GM10248 (cell line): ENCODE measurements at regions of chr6 and their contacts with region 1.

Region 1: DNA sequence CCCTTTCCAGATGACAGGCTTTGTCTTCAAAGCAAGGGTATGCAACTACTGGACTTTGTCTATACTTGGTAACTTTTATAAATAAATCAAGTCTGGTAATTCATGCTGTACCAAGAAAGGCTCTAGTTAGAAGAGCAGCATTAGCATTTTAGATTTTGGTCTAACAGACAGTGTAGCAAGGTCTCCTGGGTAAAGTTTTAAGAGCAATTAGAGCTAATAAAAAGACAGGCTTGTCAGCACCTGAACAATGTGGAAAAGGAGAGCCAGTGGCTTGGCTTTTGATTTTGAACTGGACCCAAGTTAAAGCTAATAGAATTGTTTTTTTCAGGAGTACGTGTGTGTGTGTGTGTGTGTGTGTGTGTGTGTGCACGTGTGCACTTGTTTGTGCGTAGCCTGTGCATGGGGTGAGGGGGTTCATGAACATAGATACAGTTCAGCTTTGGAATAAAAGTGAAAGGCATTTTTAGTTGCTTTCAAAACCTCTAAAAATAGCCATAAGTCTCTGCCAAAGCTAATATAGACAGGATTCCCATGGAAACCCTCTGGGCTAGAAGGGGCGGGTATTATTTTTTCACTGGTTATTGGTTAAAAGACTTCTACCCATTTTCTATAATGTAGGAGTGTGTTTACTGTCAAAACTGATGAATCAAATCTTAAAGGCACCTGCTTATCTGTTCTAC is 138.4 kb downstream of the KCNQ5 start:
- DNase-seq: no peak
- CTCF ChIP-seq: no peak

Region 2: DNA sequence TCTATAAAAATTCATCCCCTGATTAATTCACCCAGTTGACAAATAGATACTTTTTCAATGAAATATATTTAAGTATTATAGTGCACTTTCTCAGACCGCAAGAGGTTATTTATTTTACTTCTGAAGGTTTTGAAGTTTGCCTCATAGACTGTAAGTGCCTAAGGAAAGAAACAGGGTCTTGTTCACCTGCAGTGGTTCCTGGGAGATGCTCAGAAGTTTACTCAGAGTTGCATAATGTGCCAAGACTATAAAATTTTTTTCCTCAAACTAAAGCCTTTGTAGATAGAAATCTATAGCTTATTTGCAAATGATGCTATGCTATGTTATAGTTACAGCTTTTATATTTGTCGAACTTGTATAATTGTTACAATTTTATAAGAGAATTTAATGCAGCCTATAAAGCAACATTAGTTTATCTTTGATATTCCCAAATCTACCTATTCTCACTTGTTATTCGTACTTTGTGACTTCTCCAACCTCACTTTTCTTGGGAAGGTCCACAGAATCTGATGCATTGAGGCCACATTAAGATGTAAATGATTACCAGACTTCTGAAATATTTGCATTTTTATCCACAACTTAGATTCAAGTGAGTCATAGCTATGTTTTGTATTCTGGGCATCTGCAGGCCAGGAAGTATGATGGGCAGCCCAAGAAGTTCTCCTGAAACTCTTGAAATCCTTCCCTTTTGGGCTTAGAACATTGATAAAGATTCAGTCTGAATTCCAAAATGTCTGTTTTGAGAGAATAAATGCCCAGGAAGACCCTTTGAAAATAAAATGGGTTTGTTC is 102.7 kb before region 1 on chr6:
- CTCF ChIA-PET with region 1: no interaction called
- POLR2A ChIA-PET with region 1: no interaction called
- DNase-seq: no peak
- CTCF ChIP-seq: no peak

Region 3: GRCh38 chr6:72776456-72776855 is 16.2 kb after region 1 on chr6:
- CTCF ChIA-PET with region 1: interaction called, 10 read pairs
- POLR2A ChIA-PET with region 1: no interaction called
- DNase-seq: no peak
- CTCF ChIP-seq: no peak